Cardiac septum (tissue), 1 donor: ENCODE measurements at regions of chr10 and their contacts with region 1.

Region 1: DNA sequence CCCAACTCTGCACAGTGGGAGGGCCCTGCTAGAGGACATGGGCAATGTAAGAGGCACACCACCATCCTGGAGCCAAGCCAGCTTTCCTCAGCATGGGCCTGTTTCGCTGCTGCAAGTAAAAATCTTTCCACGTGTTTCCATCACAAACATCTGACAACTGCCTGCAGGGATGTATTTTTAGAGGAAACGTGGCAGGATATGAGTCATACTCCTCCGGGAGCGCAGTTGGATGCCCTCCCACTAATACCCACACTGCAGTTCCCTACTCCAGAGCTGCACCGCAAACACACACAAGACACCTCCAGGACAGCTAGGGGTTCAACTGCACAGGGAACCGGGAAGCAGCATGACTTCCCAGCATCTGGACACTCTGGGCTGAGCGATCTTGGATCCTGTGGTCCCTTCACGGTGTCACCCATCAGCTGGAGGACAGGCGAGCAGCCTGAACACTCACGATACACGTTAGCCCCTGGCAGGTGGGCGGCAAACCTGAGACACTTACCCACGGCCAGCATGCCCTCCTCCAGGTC is 26.1 kb downstream of the PLAC9 start:
- DNase-seq: peak; percentile 92

Region 2: DNA sequence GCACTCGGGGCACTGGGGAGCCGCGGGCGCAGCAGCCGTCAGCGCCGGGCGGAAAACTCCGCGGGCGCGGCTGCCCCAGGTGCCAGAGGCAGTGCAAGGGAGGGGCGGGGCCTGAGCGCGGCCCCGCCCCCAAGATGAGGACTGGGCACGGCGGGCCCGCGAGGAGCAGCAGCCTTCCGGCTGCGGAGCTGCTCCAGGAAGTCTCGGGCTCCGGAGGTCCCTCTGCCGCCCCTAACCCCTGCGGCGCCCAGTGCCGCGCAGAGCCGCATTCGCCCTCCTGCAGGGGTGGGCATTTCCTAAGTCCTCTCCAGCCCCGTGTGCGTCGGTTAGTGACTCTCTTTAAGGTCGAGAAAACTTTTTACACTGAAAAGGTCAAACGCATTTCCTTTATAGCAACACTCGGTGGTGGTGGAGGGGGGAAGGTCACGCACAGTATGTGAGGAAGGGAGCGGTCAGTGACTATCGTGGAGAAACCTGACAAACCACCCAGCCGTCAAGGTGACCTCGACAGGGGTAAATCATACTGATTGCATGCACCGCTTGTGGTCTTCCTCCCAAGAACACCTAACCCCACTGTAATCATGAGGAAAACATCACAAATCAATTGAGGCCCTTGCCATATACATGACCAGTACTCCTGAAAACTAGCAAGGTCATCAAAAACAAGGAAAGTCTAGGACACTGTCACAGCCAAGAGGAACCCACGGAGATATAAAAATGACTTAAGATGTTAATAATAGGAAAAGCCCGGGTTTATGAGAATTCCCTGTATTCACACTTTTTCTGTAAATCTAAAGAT is 47.0 kb after region 1 on chr10 and contains the start of gene ANXA11:
- intact Hi-C with region 1: loop called (anchors 1 kb)
- DNase-seq: peak; percentile 92
- total RNA-seq, gene ANXA11: 406 TPM

Region 3: DNA sequence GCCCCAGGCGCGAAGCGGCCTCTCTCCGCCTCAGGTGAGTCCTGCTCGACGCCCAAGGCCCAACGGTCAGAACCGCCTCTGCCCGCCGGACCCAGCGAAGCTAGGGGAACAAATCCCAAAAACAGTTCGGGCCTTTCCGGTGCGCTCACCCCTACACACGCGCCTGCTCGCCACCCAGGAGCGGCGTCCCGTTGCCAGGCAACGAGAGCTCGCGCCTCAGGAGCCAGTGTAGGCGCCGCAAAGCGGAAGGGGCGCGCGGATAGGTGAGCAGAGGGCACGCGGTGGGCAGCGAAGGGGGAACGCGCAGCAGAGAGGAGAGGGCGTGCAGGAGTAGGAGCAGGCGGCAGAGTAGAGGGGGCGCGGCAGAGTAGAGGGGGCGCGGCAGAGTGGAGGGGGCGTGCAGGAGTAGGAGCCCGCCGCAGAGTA is 197.9 kb after region 1 on chr10 and contains the starts of genes DYDC1 and DYDC2:
- intact Hi-C with region 1: no loop called
- DNase-seq: no peak
- total RNA-seq, gene DYDC1: not detected
- total RNA-seq, gene DYDC2: not detected